ENCODE measurements at regions of chr7 and their contacts with region 1.

Region 1: GRCh38 chr7:12211054-12211710 is at the start of gene TMEM106B:
- DNase-seq: peak; percentile 97
- H3K4me3 Mint-ChIP-seq: peak within 1 kb of the TSS; percentile 86
- H3K27ac Mint-ChIP-seq: peak within 1 kb of the TSS; percentile 93
- H3K4me1 Mint-ChIP-seq: peaks cover 17% of the 10 kb centered on the region
- H3K27me3 Mint-ChIP-seq: no peaks in the 10 kb centered on the region
- total RNA-seq, gene TMEM106B: 25.3 to 28.3 TPM

Region 2: DNA sequence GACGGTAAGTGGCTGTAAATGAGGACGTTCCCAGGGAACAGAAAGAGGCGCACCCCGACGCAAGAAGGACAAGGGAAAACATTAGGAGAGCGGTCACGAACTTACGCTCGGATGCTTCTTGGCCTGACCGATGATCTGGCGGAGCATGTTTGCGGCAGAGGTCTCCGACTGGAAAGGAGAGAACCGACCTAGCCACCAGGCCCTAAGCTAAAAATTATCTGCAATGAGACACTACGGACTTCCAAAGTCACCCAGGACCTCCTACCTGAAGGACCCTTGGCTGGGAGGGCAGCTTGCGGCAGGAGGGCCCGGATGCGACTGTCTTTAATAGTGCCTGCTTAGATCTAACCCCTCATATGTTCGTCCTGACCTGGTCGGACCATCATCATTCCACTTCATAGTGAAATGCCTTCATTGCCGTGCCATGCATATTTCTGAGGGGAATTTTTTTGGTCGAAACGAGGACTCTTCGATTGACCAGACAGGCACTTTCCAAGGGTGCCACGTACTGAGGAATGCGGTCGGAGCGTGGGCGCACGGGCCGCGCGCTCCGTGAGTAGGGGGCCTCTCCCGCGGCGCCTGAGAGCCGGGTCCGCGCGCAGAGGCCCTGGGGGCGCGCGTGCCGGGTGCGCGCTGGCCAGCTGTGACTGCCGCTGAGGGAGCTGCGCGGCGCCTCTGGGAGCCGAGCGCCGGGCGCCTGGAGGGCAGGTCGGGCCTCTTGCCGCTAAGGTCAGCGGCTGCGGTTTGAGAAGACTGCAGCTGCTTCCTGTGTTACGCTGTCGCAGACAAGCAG is 1271.1 kb before region 1 on chr7:
- CTCF ChIA-PET with region 1: no interaction called
- intact Hi-C with region 1: loop called (anchors 1 kb)
- DNase-seq: peak; percentile 86
- H3K4me3 Mint-ChIP-seq: no peak overlapping the region
- H3K27ac Mint-ChIP-seq: no peak overlapping the region
- H3K4me1 Mint-ChIP-seq: peaks cover 32% of the 10 kb centered on the region
- H3K27me3 Mint-ChIP-seq: no peaks in the 10 kb centered on the region

Region 3: GRCh38 chr7:12067141-12067831 is 143.9 kb before region 1 on chr7:
- CTCF ChIA-PET with region 1: interaction called, 7 read pairs
- intact Hi-C with region 1: loop called (anchors 1 kb)
- DNase-seq: peak; percentile 71
- H3K4me3 Mint-ChIP-seq: no peak overlapping the region
- H3K27ac Mint-ChIP-seq: no peak overlapping the region
- H3K4me1 Mint-ChIP-seq: peaks cover 15% of the 10 kb centered on the region
- H3K27me3 Mint-ChIP-seq: no peaks in the 10 kb centered on the region

Region 4: DNA sequence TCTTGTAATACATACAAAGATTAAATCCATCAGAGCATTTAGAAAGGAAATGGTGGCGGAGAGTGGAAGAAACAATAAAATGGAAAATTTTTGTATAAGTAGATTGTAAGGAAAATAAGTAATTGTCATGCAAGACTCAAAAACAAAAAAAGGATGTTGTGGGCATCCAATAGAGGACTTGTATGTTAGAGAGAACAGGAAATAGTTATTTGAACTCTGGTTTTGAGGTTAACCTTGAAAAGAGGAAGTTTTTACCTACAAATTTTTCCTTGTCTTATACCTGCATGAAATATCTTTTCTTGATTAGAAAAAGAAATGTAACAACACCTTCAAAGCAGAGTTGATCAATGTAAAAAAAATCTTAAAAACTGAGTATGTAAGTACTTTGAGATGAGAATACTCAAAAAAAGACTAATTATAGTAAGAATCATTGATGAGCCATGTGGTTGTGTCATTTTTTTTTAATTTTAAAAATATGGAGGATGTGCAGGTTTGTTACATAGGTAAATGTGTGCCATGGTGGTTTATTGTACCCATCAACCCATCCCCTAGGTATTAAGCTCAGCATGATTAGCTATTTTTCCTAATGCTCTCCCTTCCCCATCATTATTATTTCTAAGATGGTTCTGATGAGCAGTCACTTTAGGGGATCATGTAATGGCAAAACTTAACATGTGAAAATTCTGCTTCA is 11.9 kb after region 1 on chr7:
- CTCF ChIA-PET with region 1: interaction called, 3 read pairs
- intact Hi-C with region 1: loop called (anchors 1 kb)
- DNase-seq: no peak
- H3K4me3 Mint-ChIP-seq: peak overlapping the region; percentile 36
- H3K27ac Mint-ChIP-seq: peak overlapping the region; percentile 88
- H3K4me1 Mint-ChIP-seq: peaks cover 35% of the 10 kb centered on the region
- H3K27me3 Mint-ChIP-seq: no peaks in the 10 kb centered on the region

Region 5: GRCh38 chr7:12281038-12281437 is 69.9 kb after region 1 on chr7:
- CTCF ChIA-PET with region 1: no interaction called
- intact Hi-C with region 1: loop called (anchors 5 kb)
- DNase-seq: no peak
- H3K4me3 Mint-ChIP-seq: no peak overlapping the region
- H3K27ac Mint-ChIP-seq: no peak overlapping the region
- H3K4me1 Mint-ChIP-seq: peaks cover 4% of the 10 kb centered on the region
- H3K27me3 Mint-ChIP-seq: peaks cover 3% of the 10 kb centered on the region

Region 6: DNA sequence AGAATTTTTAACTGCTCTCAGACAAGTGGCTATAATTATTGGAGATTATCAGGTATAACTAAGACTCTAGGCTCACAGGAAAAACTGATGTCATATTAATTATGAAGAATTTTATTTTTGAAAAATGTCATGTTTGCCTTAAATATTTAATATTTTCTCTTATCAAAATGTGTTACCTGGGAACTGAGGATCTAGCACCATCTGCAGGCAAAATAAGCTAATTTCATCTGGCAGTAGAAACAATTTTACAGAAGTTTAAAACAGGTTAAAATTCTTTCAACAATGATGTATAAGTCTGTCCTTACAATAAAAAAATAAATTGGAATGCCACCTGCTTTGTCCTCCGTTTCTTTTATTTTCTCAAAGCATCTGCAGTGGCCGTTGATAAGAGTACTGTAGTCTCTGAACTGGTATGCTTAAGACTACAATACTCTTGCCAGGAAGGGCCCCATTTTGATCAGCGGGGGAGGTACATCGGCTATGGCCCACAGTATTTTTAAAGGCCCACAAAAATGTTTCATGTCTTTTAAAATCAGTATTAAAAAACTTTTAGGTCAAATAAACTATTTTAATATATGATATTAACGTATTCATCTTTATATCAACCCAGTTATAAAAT is 111.2 kb after region 1 on chr7:
- CTCF ChIA-PET with region 1: no interaction called
- intact Hi-C with region 1: loop called (anchors 1 kb)
- DNase-seq: peak; percentile 31
- H3K4me3 Mint-ChIP-seq: no peak overlapping the region
- H3K27ac Mint-ChIP-seq: no peak overlapping the region
- H3K4me1 Mint-ChIP-seq: peaks cover 2% of the 10 kb centered on the region
- H3K27me3 Mint-ChIP-seq: no peaks in the 10 kb centered on the region

Region 7: GRCh38 chr7:12351843-12352242 is 140.7 kb after region 1 on chr7:
- CTCF ChIA-PET with region 1: no interaction called
- intact Hi-C with region 1: no loop called
- DNase-seq: no peak
- H3K4me3 Mint-ChIP-seq: no peak overlapping the region
- H3K27ac Mint-ChIP-seq: no peak overlapping the region
- H3K4me1 Mint-ChIP-seq: no peaks in the 10 kb centered on the region
- H3K27me3 Mint-ChIP-seq: peaks cover 2% of the 10 kb centered on the region

Region 8: DNA sequence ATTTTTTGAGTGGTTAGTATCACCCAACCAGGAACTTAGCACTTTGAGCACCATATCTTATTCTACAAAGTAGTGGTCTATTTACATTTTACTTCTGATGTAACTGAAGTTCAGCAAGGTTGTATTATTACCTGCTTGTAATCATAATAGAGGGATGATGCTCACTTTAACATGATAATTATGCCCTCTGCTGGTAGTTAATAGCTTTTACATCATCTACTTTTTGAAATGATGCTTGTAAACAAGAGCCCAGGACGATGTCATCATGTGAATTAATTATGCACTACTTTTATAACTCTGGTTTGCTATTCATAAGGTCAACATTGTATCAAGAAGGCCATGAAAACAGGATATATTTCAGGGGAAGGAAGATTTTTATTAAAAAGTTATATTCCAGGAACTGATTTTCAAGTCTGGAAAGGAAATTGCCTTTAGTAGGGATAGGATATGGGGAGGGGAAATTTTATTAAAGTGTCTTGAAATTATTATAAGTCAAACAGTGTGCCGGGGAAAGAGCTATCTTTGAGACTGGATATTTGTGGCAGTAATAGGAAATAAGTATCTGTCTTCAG is 279.0 kb after region 1 on chr7:
- CTCF ChIA-PET with region 1: no interaction called
- intact Hi-C with region 1: loop called (anchors 5 kb)
- DNase-seq: no peak
- H3K4me3 Mint-ChIP-seq: no peak overlapping the region
- H3K27ac Mint-ChIP-seq: no peak overlapping the region
- H3K4me1 Mint-ChIP-seq: no peaks in the 10 kb centered on the region
- H3K27me3 Mint-ChIP-seq: no peaks in the 10 kb centered on the region